Endothelial cell of umbilical vein (primary cell): ENCODE measurements at regions of chr3 and their contacts with region 1.

Region 1: GRCh38 chr3:188439080-188439479 is 285.1 kb downstream of the LPP start:
- DNase-seq: peak; percentile 85
- H3K4me3 ChIP-seq: no peak overlapping the region
- H3K27ac ChIP-seq: peak overlapping the region; percentile 86
- H3K4me1 ChIP-seq: peaks cover 36% of the 10 kb centered on the region
- H3K27me3 ChIP-seq: no peaks in the 10 kb centered on the region
- CTCF ChIP-seq: no peak
- POLR2A ChIP-seq: no peak

Region 2: GRCh38 chr3:188205992-188206416 is 233.1 kb before region 1 on chr3:
- CTCF ChIA-PET with region 1: no interaction called
- POLR2A ChIA-PET with region 1: no interaction called
- dilution Hi-C with region 1: no loop called
- intact Hi-C with region 1: no loop called
- DNase-seq: no peak
- H3K4me3 ChIP-seq: no peak overlapping the region
- H3K27ac ChIP-seq: no peak overlapping the region
- H3K4me1 ChIP-seq: no peaks in the 10 kb centered on the region
- H3K27me3 ChIP-seq: no peaks in the 10 kb centered on the region
- CTCF ChIP-seq: peak in 1 of 2 donors; percentile 10
- POLR2A ChIP-seq: no peak

Region 3: DNA sequence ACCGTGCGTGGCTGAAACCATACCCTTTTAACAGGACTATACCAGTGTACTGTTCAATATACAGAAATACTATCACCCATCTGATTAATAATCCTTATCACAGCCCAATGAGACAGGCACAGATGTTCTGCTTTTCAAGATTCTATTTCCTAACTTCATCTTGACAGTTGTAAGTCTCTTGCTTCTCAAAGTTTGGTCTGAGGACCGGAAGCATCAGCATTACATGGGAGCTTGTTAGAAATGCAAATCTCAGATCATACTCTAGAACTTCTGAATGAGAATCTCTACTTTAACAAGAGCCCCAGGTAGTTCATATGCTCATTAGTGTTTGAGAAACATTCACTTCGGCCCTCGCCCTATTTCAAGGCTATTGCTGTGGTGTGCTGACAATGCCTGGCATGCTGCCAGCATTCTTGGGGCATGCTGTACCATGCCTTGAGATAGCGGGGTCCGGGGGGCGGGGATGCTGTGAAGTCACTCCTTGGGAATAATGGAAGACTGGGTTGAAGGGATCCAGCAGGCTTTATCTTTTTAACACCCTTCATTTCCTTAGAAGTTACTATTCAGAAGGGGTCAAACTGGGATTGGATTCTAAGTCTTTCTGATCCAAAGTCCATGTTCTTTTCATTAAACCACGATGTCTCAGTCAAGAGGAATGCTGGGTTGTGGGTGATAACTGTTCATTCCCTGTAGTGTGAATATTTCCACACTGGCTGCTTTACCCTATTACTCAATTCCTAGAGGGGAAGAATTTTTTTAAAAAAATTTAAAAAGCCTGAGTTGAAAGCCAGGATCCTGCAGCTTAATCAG is 90.4 kb before region 1 on chr3:
- CTCF ChIA-PET with region 1: no interaction called
- POLR2A ChIA-PET with region 1: no interaction called
- dilution Hi-C with region 1: no loop called
- intact Hi-C with region 1: loop called (anchors 5 kb)
- DNase-seq: peak; percentile 88
- H3K4me3 ChIP-seq: no peak overlapping the region
- H3K27ac ChIP-seq: peak overlapping the region; percentile 62
- H3K4me1 ChIP-seq: peaks cover 28% of the 10 kb centered on the region
- H3K27me3 ChIP-seq: no peaks in the 10 kb centered on the region
- CTCF ChIP-seq: no peak
- POLR2A ChIP-seq: no peak

Region 4: DNA sequence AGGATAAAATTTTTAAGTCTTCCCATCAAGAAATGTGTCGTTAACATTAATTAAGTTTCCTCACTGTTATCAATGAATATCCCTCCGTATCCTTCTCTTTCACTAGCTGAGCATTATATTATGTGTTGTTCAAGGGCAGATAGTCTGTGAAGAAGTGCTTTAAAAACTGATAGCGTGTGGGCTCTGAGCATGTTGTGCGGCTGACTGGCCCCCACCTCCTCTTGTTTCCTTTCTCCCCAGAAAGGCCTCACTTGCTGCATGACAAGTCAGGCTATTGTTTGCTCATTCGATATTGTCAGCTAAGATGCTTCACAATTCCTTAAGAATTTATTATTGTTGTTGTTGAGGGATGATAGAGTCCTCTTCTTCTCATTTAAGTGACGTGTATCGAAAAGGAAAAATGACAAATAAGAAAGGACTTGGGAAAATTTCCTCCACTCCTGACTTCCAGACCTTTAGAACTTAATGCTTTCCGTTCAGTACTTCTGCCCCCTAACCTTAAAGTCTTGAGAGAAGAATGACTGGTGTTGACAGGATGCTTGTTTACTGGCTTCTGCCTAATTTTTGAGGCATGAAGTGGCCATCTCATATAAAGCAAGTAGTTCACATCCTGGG is 13.2 kb after region 1 on chr3:
- CTCF ChIA-PET with region 1: no interaction called
- POLR2A ChIA-PET with region 1: no interaction called
- dilution Hi-C with region 1: no loop called
- intact Hi-C with region 1: loop called (anchors 1 kb)
- DNase-seq: peak; percentile 61
- H3K4me3 ChIP-seq: no peak overlapping the region
- H3K27ac ChIP-seq: peak overlapping the region; percentile 46
- H3K4me1 ChIP-seq: peaks cover 30% of the 10 kb centered on the region
- H3K27me3 ChIP-seq: no peaks in the 10 kb centered on the region
- CTCF ChIP-seq: no peak
- POLR2A ChIP-seq: no peak

Region 5: DNA sequence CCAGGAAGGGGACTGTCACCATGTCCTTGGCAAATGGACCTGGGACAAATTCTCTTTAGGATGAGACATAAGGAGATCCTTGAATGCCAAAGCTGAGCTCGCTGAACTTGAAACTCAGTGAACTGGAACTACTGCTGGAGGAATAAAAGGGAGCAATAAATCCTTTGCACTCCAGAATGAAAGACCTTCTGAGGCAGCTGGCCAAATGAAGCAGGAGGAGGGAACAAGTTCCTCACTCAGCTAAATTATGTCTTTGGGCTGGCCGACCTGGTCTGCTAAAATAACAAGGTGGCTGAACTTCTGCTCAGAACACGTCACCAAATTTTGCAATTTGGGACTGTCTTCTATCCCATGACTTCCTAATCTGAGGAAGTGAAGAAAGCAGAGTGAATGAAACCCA is 29.6 kb after region 1 on chr3:
- CTCF ChIA-PET with region 1: interaction called, 3 read pairs
- POLR2A ChIA-PET with region 1: no interaction called
- dilution Hi-C with region 1: no loop called
- intact Hi-C with region 1: loop called (anchors 1 kb)
- DNase-seq: no peak
- H3K4me3 ChIP-seq: no peak overlapping the region
- H3K27ac ChIP-seq: peak overlapping the region; percentile 28
- H3K4me1 ChIP-seq: peaks cover 16% of the 10 kb centered on the region
- H3K27me3 ChIP-seq: no peaks in the 10 kb centered on the region
- CTCF ChIP-seq: no peak
- POLR2A ChIP-seq: no peak

Region 6: GRCh38 chr3:188546835-188547670 is 108.0 kb after region 1 on chr3:
- CTCF ChIA-PET with region 1: no interaction called
- POLR2A ChIA-PET with region 1: no interaction called
- dilution Hi-C with region 1: no loop called
- intact Hi-C with region 1: no loop called
- DNase-seq: peak; percentile 87
- H3K4me3 ChIP-seq: peak overlapping the region in 1 of 3 experiments; percentile 22
- H3K27ac ChIP-seq: peak overlapping the region; percentile 86
- H3K4me1 ChIP-seq: peaks cover 34% of the 10 kb centered on the region
- H3K27me3 ChIP-seq: no peaks in the 10 kb centered on the region
- CTCF ChIP-seq: no peak
- POLR2A ChIP-seq: no peak

Region 7: GRCh38 chr3:188578576-188579363 is 139.7 kb after region 1 on chr3:
- CTCF ChIA-PET with region 1: no interaction called
- POLR2A ChIA-PET with region 1: no interaction called
- dilution Hi-C with region 1: no loop called
- intact Hi-C with region 1: no loop called
- DNase-seq: peak; percentile 7
- H3K4me3 ChIP-seq: no peak overlapping the region
- H3K27ac ChIP-seq: no peak overlapping the region
- H3K4me1 ChIP-seq: peaks cover 6% of the 10 kb centered on the region
- H3K27me3 ChIP-seq: no peaks in the 10 kb centered on the region
- CTCF ChIP-seq: no peak
- POLR2A ChIP-seq: no peak